PC-3 (cell line): ENCODE measurements at regions of chr3 and their contacts with region 1.

Region 1: GRCh38 chr3:162489853-162490252 is 993.2 kb downstream of the OTOL1 start:
- DNase-seq: peak; percentile 53
- ATAC-seq: peak; percentile 60
- H3K4me3 ChIP-seq: no peak overlapping the region
- H3K27ac ChIP-seq: no peak overlapping the region
- H3K4me1 ChIP-seq: peaks cover 21% of the 10 kb centered on the region
- H3K27me3 ChIP-seq: no peaks in the 10 kb centered on the region
- CTCF ChIP-seq: peak; percentile 57

Region 2: GRCh38 chr3:162376761-162377160 is 113.1 kb before region 1 on chr3:
- CTCF ChIA-PET with region 1: no interaction called
- POLR2A ChIA-PET with region 1: no interaction called
- intact Hi-C with region 1: loop called (anchors 5 kb)
- DNase-seq: peak; percentile 69
- ATAC-seq: peak; percentile 75
- H3K4me3 ChIP-seq: no peak overlapping the region; the same call in 1 of the 2 replicates
- H3K27ac ChIP-seq: peak overlapping the region; percentile 66
- H3K4me1 ChIP-seq: peaks cover 13% of the 10 kb centered on the region
- H3K27me3 ChIP-seq: no peaks in the 10 kb centered on the region
- CTCF ChIP-seq: no peak